Activated CD8-positive, alpha-beta memory T cell treated with anti-CD3 and anti-CD28 coated beads, Interleukin-2, amount 10 ng/mL, durations not matched to agents 7 days and 5 days (primary cell): ENCODE measurements at regions of chr6 and their contacts with region 1.

Region 1: DNA sequence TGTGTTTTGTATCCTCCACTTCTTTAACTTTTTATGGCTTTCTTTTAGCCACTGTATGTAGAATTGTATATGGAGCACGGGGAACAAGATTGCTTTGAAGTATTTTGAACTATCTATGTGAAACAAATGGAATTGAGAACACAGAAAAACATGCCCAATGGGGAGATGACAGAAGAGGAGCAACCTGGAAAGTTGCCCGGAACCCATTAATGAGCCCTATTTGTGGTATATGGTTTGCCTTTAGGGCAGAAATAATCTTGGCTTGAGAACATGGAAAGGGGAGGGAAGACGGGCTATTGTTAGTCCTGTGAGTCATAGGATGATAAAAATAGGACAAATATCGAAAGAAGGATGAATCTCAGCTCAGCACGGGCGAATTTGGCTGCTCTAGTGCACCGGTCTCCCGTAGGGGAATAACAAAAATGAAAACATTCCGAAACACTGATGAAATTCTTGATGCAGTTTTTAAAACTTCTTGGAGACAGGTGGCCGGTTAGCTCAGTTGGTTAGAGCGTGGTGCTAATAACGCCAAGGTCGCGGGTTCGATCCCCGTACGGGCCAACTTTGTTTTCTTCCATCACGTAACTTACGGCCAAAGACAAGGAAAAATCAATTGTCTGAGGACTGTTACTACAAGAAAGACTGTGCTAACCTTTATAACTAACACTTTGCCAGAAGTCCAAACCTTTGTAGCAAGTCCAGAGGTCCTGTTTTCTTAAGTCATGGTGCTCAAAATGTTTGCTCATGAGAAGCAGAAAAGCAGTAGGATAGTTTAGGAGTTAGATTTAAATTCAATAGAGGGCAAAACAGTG is 15.7 kb downstream of the HMGN4 start:
- DNase-seq: peak; percentile 90
- ATAC-seq: peak; percentile 63
- H3K4me3 Mint-ChIP-seq: no peak overlapping the region
- H3K27ac Mint-ChIP-seq: no peak overlapping the region
- H3K4me1 Mint-ChIP-seq: peaks cover 30% of the 10 kb centered on the region
- H3K27me3 Mint-ChIP-seq: no peaks in the 10 kb centered on the region

Region 2: GRCh38 chr6:26537846-26538571 is 15.8 kb before region 1 on chr6 and contains the start of gene HMGN4:
- CTCF ChIA-PET with region 1: interaction called, 60 read pairs
- DNase-seq: peak; percentile 85
- ATAC-seq: peak; percentile 73
- H3K4me3 Mint-ChIP-seq: peak within 1 kb of the TSS; percentile 87
- H3K27ac Mint-ChIP-seq: peak within 1 kb of the TSS; percentile 95
- H3K4me1 Mint-ChIP-seq: peaks cover 58% of the 10 kb centered on the region
- H3K27me3 Mint-ChIP-seq: no peaks in the 10 kb centered on the region
- total RNA-seq, gene HMGN4: 75.6 to 78.4 TPM